PC-9 (cell line): ENCODE measurements at regions of chr9 and their contacts with region 1.

Region 1: DNA sequence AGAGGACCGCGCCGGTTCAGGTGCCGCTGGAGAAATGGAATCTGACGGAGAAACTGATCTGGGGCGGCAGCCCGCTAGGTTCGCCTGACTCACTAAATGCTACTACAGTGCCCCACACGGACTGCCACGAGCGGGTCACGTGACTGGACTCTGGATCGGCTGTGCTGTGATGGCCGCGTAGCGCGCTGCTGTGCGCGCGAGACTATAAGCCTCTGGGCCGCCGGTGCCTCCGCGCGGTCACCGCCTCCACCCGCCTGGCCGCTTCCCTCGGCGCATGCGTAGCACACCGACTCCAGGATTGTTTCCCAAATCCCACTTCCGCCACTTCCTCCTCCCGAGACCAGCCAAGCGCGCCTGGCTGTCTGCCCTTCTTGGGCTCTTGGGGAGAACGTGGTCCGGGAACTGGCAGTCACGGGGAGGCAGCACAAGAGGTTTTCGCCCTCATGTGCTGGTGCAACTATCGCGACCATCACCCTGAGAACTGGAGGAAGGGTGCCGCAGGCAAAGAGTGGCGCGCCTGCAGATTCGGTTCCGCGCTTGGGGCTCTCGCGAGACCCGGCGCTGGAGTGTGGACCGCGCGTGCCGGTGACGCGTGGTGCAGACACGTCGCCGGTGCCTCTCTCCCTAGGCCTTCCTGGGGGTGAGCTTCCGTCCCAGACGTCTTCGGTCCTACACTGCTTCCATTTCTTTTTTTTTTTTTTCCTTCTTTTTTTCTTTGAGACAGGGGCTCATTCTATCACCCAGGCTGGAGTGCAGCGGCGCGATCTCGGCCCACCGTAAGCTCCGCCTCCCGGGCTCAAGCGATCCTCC is 35.8 kb upstream of the GLDC start:
- DNase-seq: peak; percentile 92 to 93
- H3K4me3 ChIP-seq: peak overlapping the region; percentile 84
- H3K27ac ChIP-seq: peak overlapping the region; percentile 99
- H3K4me1 ChIP-seq: peaks cover 9% of the 10 kb centered on the region
- H3K27me3 ChIP-seq: no peaks in the 10 kb centered on the region
- CTCF ChIP-seq: no peak

Region 2: DNA sequence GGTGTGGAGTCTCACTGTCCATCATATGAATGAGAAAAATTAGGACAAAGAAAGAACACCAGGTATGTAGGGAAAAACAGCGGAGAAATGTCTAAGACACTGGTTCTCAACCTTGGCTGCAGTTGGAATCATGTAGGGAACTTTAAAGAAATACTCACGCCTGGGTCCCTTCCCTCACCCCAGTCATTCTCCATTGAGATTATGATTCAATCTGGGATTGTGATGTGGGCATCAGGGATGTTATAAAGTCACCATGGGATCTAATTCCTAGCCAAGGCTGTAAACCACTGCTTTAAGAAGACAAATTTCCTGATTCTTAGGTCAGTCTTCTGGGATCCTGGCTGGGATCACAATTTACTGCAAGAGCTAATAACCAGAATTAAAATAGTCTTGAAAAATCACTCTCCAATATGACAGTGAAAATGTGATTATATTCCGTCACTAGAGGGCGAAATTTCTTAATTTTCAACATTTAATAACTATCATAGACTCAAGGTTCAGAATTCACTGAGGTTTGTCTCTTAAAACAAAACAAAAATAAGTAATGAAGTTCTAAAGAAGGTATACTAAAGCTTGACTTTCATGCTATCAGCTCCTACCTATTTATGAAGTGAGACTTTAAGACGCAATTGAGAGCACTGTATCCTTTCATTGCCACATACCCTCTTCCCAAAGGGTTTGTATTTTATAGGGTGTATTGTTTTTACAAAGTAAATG is 96.3 kb before region 1 on chr9:
- CTCF ChIA-PET with region 1: no interaction called
- POLR2A ChIA-PET with region 1: no interaction called
- intact Hi-C with region 1: loop called (anchors 5 kb)
- DNase-seq: no peak
- H3K4me3 ChIP-seq: no peak overlapping the region
- H3K27ac ChIP-seq: no peak overlapping the region
- H3K4me1 ChIP-seq: 0 out of 2 replicates have a peak, but pooled peaks cover under 1% of the 10 kb centered on the region
- H3K27me3 ChIP-seq: no peaks in the 10 kb centered on the region
- CTCF ChIP-seq: peak; percentile 67

Region 3: DNA sequence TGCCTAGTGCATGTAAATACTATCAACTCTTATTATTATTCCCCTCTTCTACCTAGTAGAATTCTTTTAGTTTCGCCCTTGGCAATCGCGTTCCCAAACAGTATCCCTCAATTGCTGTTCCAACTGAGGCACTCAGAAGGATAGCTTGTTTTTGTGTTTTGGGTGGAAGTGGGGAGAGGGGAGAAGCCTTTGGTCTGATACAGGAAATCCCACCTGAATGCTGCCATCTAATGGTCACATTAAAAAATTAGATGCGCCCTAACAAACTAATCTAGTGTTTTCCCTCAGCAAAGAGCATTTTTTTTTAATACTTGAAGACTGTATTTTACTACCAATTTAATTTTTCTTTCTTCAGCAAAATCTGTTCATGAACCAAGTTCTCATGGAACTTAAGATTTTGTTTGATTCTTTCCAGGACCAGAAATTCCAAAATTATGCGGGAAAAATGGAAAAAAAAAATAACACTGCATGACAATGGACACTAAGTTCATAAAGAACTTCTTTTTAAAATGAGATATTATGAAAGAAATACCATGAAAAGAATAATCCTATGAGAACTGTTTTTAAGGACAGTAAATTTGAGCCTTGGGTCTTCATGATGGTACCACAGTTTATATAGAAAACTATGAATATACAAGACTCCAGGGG is 13.6 kb before region 1 on chr9:
- CTCF ChIA-PET with region 1: interaction called, 10 read pairs
- POLR2A ChIA-PET with region 1: interaction called, 8 read pairs
- intact Hi-C with region 1: no loop called
- DNase-seq: no peak
- H3K4me3 ChIP-seq: no peak overlapping the region
- H3K27ac ChIP-seq: no peak overlapping the region
- H3K4me1 ChIP-seq: peaks cover 15% of the 10 kb centered on the region
- H3K27me3 ChIP-seq: no peaks in the 10 kb centered on the region
- CTCF ChIP-seq: peak; percentile 69

Region 4: DNA sequence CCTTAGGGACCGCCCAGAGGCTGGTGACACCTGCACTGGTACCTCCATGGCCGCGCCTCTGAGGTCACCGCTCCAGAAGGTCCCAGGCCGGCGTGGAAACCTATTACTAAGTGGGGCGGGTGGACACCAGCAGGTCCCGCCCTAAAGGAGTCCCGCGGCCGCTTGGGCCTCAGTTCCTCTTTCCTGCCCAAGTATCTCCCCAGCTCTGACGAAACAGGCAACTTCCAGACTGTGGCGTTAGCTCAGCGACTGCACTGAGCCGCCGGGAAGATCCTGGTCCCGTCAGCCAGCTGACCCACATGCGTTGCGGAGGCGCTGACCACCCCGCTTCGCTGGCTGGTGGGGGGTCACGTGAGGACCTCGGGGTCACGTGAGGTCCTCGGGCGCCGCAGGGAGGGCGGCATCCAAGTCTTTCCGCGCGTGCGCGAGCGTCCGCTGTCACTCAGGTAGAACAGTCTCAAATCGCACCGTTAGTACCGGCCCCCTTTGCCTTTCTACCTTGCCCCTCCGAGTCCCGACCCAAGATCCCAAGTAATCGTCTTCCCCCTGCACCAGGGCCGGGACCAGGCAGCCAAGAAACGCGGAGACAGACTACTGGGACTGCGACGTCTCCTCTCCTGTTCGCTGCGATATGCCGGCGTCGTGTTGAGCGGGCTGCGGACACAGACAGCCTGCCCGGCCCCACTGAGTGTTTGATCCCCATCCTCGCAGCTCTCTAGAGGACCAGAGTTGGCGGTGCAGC is 22.7 kb after region 1 on chr9:
- CTCF ChIA-PET with region 1: interaction called, 11 read pairs
- POLR2A ChIA-PET with region 1: interaction called, 3 read pairs
- intact Hi-C with region 1: loop called (anchors 2 kb)
- DNase-seq: peak; percentile 37 to 81
- H3K4me3 ChIP-seq: peak overlapping the region; percentile 51
- H3K27ac ChIP-seq: no peak overlapping the region
- H3K4me1 ChIP-seq: no peaks in the 10 kb centered on the region
- H3K27me3 ChIP-seq: no peaks in the 10 kb centered on the region
- CTCF ChIP-seq: no peak

Region 5: DNA sequence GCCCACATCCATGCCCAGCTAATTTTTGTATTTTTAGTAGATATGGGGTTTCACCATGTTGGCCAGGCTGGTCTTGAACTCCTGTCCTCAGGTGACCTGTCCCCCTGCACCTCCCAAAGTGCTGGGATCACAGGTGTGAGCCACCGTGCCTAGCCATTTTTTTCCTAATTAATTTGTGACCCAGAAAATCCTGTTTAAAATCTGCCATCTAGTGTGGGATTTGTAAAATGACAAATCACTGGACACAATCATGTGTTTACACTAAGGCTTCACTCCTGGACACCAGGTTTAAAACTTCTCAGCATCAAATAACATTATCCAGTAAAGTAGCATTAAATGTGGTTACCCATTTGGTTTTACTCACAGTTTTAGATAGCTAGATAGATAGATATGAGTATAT is 57.9 kb after region 1 on chr9:
- CTCF ChIA-PET with region 1: no interaction called
- POLR2A ChIA-PET with region 1: interaction called, 14 read pairs
- intact Hi-C with region 1: no loop called
- DNase-seq: peak in 1 of 2 experiments; percentile 43
- H3K4me3 ChIP-seq: no peak overlapping the region
- H3K27ac ChIP-seq: no peak overlapping the region
- H3K4me1 ChIP-seq: no peaks in the 10 kb centered on the region
- H3K27me3 ChIP-seq: no peaks in the 10 kb centered on the region
- CTCF ChIP-seq: peak; percentile 60

Region 6: GRCh38 chr9:6757456-6758247 is 76.3 kb after region 1 on chr9 and contains the start of gene KDM4C:
- CTCF ChIA-PET with region 1: no interaction called
- POLR2A ChIA-PET with region 1: no interaction called
- intact Hi-C with region 1: loop called (anchors 1 kb)
- DNase-seq: peak; percentile 72 to 86
- H3K4me3 ChIP-seq: peak within 1 kb of the TSS; percentile 86
- H3K27ac ChIP-seq: peak within 1 kb of the TSS; percentile 92
- H3K4me1 ChIP-seq: peaks cover 12% of the 10 kb centered on the region
- H3K27me3 ChIP-seq: no peaks in the 10 kb centered on the region
- CTCF ChIP-seq: no peak
- total RNA-seq, gene KDM4C: 11.6 and 12.9 TPM in 2 replicates